AG04450 (cell line): ENCODE measurements at regions of chr5 and their contacts with region 1.

Region 1: DNA sequence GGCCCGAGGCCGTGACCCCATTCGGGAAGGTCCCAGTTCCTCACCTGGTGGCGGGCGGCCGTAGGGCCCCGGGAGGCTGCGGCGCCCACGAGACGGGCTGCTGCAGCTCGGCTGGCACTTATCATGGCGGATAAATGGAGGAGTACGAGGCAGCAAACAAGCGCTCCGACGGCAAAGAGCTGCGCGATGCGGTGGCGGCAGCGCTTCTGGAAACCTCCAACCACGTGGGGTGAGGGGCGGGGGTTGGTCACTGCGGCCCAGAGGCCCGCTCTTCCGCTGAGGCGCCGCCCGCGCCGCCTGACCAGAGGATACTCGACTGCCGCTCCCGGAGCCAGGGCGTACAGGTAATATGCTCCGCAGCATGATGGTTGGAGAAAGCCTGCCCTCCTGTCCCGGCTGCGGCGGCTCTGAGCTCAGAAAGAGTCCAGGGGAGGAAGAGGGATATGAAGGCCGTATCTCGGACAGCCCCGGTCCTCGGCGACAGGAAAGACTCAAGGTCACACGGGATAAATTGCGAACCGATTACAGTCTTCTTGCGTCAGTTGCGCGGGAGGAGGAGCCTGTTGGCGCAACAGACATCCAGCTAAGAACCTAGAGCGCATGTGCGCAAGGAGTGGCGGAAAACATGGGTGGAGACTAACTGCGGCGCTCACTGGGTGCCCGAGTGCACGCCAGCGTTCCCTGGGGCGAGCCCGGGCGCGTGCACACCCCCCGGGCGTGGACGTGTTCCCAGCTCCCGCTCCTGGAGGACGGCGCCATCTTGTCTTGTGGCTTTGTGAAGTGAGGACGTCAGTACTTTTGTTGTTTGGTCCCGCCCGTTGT is at the start of gene HSPA9:
- DNase-seq: peak; percentile 99
- H3K4me3 ChIP-seq: peak within 1 kb of the TSS; percentile 93
- H3K27ac ChIP-seq: peak within 1 kb of the TSS; percentile 100
- H3K27me3 ChIP-seq: no peaks in the 10 kb centered on the region
- CTCF ChIP-seq: no peak
- polyA plus RNA-seq, gene HSPA9: 194 and 207 TPM in 2 replicates

Region 2: DNA sequence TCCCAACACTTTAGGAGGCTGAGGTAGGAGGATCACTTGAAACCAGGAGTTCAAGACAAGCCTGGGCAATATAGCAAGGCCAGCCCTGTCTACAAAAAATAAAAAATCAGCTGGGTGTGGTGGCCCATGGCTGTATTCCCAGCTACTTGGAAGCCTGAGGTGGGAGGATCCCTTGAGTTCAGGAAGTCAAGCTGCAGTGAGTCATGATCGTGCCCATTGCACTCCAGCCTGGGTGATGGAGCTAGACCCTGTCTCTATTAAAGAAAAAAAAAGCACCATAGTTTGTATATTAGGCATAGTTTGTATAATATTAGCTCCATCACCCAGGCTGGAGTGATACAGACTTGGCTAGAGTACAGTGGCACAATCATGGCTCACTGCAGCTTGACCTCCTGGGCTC is 426.6 kb before region 1 on chr5:
- CTCF ChIA-PET with region 1: no interaction called
- POLR2A ChIA-PET with region 1: no interaction called
- DNase-seq: no peak
- H3K4me3 ChIP-seq: no peak overlapping the region
- H3K27ac ChIP-seq: no peak overlapping the region
- H3K27me3 ChIP-seq: no peaks in the 10 kb centered on the region
- CTCF ChIP-seq: no peak

Region 3: DNA sequence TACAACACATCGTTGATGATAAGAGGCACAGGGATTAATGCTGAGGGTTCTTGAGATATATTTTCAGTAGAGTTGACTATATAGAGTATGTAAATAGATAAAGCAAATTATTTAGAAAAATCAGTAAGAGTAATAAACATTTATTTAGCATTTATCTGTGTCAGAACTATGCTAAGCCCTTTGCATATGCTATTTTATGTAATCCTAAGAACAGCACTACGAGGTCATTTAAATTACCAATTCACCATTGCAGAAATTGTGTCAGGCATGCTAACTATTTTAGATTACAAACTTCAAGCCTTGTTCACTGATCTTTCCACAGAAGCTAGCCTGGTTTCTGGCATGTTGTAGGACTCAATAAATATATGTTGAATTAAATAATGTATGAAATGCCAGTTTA is 157.0 kb before region 1 on chr5:
- CTCF ChIA-PET with region 1: no interaction called
- POLR2A ChIA-PET with region 1: no interaction called
- DNase-seq: no peak
- H3K4me3 ChIP-seq: no peak overlapping the region
- H3K27ac ChIP-seq: no peak overlapping the region
- H3K27me3 ChIP-seq: no peaks in the 10 kb centered on the region
- CTCF ChIP-seq: no peak

Region 4: DNA sequence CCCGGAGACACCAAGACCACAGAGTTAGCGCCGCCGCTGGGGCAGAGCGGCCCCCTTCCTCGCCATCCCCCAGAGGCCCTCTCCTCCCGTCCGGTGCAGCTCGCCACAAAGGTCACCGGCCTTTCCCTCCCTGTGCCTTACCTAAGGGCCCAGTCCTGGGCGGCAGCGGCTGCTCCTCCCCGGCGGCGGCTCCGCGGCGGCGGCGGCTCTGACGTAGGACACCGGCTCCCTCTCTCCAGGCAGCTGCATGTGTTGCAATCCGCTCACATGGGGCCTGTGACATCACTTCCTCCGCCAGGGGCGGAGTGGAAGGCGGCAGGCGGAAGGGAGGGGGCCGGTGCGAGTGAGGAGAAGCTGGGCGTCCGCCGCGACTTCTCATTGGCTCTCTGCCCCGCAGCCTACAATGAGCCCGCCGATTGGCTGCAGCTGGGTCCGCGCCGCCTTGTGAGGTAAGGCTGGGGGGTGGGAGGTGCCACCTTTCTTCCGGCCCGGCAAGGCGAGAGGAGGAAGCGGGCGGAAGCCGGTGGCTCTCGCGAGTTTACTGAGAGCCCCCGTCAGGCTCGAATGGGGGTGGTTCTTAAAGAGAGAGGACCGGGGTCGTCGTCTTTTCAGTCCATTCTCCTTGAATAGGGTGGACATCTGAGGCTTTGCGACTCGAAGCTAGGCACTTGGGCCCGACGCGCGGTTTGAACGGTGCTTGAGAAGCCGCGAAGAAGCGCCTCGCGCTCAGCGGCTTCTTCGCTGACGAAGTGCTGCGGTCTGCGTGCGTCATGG is 32.3 kb before region 1 on chr5 and contains the start of gene ETF1:
- CTCF ChIA-PET with region 1: interaction called, 3 read pairs
- POLR2A ChIA-PET with region 1: interaction called, 17 read pairs
- DNase-seq: peak; percentile 99
- H3K4me3 ChIP-seq: peak within 1 kb of the TSS; percentile 94
- H3K27ac ChIP-seq: peak within 1 kb of the TSS; percentile 100
- H3K27me3 ChIP-seq: no peaks in the 10 kb centered on the region
- CTCF ChIP-seq: no peak
- polyA plus RNA-seq, gene ETF1: 85.3 and 107 TPM in 2 replicates

Region 5: GRCh38 chr5:138605254-138605972 is 30.0 kb after region 1 on chr5:
- CTCF ChIA-PET with region 1: interaction called, 11 read pairs
- POLR2A ChIA-PET with region 1: interaction called, 7 read pairs
- DNase-seq: no peak
- H3K4me3 ChIP-seq: no peak overlapping the region
- H3K27ac ChIP-seq: no peak overlapping the region
- H3K27me3 ChIP-seq: peaks cover 13% of the 10 kb centered on the region
- CTCF ChIP-seq: no peak

Region 6: DNA sequence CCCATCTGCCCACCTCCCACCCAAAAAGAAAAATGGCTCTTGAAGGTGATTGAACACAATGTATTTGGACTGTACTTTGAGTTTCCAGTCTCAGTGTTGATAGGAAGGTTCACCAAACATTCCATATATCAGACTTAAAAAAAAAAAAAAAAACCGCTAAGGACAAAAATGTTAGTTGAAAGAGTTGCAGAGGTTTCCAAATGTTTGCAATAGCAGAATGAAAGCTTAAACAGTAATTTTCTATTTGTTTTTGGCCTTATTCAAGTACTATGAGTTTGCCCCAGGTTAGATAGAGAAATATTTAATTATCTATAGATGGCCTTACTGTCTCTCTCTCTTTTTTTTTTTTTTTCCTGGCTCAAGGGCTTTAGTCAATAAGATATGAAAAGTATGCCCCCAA is 293.6 kb after region 1 on chr5:
- CTCF ChIA-PET with region 1: interaction called, 3 read pairs
- POLR2A ChIA-PET with region 1: interaction called, 13 read pairs
- DNase-seq: no peak
- H3K4me3 ChIP-seq: no peak overlapping the region
- H3K27ac ChIP-seq: no peak overlapping the region
- H3K27me3 ChIP-seq: no peaks in the 10 kb centered on the region
- CTCF ChIP-seq: no peak

Region 7: DNA sequence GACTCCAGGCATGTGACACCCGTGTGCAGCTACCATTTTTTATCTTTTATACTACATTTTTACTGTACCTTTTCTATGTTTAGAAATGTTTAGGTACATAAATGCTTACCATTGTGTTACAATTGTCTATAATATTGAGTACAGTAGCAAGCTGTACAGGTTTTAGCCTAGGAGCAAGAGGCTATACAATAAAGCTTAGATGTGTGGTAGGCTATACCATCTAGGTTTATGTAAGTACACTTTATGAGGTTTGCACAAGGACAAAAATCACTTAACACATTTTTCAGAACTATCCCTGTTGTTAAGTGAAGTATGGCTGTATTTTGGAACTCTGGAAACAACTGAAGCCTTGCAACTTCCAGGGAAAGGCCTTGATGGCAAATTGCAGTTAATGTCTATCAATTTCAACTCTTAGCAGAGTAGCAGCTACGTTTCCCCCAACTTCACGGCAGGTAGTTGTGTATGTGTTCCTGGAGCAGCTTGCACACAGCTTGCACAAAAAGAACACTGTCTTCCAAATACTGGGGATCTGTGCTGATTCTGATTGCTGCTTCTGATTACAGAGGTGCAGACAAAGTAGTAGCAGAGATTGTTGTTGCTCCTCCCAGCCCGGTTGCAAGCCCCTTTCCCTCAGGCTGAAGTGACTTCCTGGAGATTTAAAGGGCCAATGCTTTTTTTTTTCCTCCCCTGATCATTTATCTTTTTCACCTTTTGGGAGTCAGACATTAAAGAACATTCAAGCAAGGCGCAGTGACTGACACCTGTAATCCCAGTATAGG is 592.7 kb after region 1 on chr5:
- CTCF ChIA-PET with region 1: no interaction called
- POLR2A ChIA-PET with region 1: no interaction called
- DNase-seq: no peak
- H3K4me3 ChIP-seq: no peak overlapping the region
- H3K27ac ChIP-seq: no peak overlapping the region
- H3K27me3 ChIP-seq: no peaks in the 10 kb centered on the region
- CTCF ChIP-seq: no peak

Region 8: GRCh38 chr5:139341650-139342422 is 766.4 kb after region 1 on chr5 and contains the start of gene PAIP2:
- CTCF ChIA-PET with region 1: no interaction called
- POLR2A ChIA-PET with region 1: interaction called, 19 read pairs
- DNase-seq: peak; percentile 95
- H3K4me3 ChIP-seq: peak within 1 kb of the TSS; percentile 100
- H3K27ac ChIP-seq: peak within 1 kb of the TSS; percentile 99
- H3K27me3 ChIP-seq: no peaks in the 10 kb centered on the region
- CTCF ChIP-seq: peak; percentile 71
- polyA plus RNA-seq, gene PAIP2: 76.3 and 113 TPM in 2 replicates